Ascending aorta (tissue), 2 donors: ENCODE measurements at regions of chr1 and their contacts with region 1.

Region 1: DNA sequence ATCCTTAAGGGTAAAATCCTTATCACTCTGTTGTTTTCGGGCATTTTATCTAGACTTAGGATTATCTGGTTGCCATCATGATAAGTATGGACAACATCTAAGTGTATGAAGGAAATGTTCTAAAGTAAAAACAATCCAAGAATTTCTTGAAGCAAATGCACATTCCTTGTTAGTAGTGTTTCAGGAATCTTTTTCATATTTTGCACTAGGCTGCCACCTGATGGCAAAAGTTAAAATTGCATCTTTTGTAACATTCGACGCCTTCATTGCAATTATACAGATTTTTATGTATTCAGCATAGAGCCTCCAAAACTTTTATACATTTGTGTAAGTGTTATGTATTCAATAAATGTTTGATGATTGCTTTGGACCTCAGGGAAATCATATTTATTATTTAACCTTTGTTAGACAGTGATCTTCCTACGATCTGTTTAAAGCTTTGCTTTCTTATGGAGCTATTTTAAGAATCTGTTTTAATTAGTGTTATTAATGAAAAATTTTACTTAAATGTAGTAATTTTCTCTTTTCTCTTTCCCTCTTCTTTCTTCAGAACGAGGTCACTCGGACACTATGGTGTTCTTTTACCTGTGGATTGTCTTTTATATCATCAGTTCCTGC is 49.4 kb upstream of the KIAA1614 start:
- DNase-seq: peak in 1 of 2 donors; percentile 66
- H3K4me3 ChIP-seq: no peak overlapping the region
- H3K27ac ChIP-seq: no peak overlapping the region
- H3K4me1 ChIP-seq: peaks cover 0 to 3% of the 10 kb centered on the region in 2 donors
- H3K27me3 ChIP-seq: no peaks in the 10 kb centered on the region
- CTCF ChIP-seq: peak; percentile 56 to 78 (median 63)

Region 2: DNA sequence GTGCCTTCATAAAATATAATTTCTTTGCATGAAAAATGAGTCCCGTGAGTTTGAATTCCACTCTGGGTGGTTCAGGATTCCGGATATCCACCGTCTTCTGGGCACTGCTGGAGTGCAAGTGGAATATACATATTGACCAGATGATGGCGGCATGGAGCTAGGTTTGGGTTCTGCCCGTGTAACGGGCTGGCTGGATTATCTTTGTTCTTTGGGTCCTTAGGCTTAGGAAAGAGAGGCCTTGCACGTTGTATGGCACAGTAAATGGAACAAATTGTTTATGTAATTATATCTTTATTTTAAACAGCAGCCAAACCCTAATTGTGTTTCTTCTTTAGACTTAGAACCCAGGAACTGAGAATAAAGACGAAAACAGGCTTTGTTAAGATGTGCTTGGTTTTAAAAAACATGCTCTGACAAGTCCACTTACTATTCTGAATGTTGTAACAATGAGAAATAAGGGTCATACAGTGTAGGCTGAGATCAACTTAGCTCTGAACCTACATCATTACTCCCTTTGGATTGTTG is 347.3 kb before region 1 on chr1:
- intact Hi-C with region 1: loop called (anchors 5 kb)
- DNase-seq: peak in 1 of 2 donors; percentile 79
- H3K4me3 ChIP-seq: no peak overlapping the region
- H3K27ac ChIP-seq: no peak overlapping the region
- H3K4me1 ChIP-seq: peaks cover 0 to 8% of the 10 kb centered on the region in 2 donors
- H3K27me3 ChIP-seq: no peaks in the 10 kb centered on the region
- CTCF ChIP-seq: peak; percentile 72 to 92 (median 79)

Region 3: GRCh38 chr1:180533266-180533987 is 329.8 kb before region 1 on chr1:
- intact Hi-C with region 1: loop called (anchors 5 kb)
- DNase-seq: peak in 1 of 2 donors; percentile 79
- H3K4me3 ChIP-seq: no peak overlapping the region
- H3K27ac ChIP-seq: no peak overlapping the region
- H3K4me1 ChIP-seq: peaks cover 8 to 14% of the 10 kb centered on the region in 2 donors
- H3K27me3 ChIP-seq: no peaks in the 10 kb centered on the region
- CTCF ChIP-seq: peak; percentile 70 to 83 (median 77)